ENCODE measurements at regions of chr17 and their contacts with region 1.

Region 1: GRCh38 chr17:69567130-69567529 is 152.6 kb downstream of the MAP2K6 start:
- DNase-seq: no peak
- ATAC-seq: no peak
- H3K4me3 ChIP-seq: no peak overlapping the region
- H3K4me3 Mint-ChIP-seq: no peak overlapping the region
- H3K27ac ChIP-seq: no peak overlapping the region
- H3K27ac Mint-ChIP-seq: no peak overlapping the region
- H3K4me1 ChIP-seq: peaks cover 4% of the 10 kb centered on the region
- H3K4me1 Mint-ChIP-seq: no peaks in the 10 kb centered on the region
- H3K27me3 ChIP-seq: peaks cover 0 to 6% of the 10 kb centered on the region in 2 experiments
- H3K27me3 Mint-ChIP-seq: peaks cover 7% of the 10 kb centered on the region
- CTCF ChIP-seq: no peak

Region 2: DNA sequence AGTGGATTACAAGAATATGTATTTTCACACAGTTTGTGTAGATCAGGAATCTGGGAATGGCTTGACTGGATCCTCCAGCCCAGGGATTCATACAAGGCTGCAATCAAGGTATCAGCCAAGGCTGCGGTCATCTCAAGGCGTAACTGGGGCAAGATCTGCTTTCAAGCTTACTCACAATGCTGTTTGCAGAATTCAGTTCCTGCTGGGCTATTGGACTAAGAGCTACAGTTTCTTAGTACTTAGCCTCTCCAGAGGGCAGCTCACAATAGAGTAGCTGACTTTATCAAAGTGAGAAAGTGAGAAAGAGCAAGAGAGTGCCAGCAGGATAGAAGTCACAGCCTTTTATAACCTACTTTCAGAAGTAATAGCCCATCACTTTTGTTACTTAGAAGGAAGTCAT is 58.3 kb after region 1 on chr17:
- CTCF ChIA-PET with region 1: no interaction called
- POLR2A ChIA-PET with region 1: no interaction called
- intact Hi-C with region 1: loop called in 1 of 2 experiments (anchors 10 kb)
- DNase-seq: no peak
- ATAC-seq: no peak
- H3K4me3 ChIP-seq: no peak overlapping the region
- H3K4me3 Mint-ChIP-seq: no peak overlapping the region
- H3K27ac ChIP-seq: no peak overlapping the region
- H3K27ac Mint-ChIP-seq: no peak overlapping the region
- H3K4me1 ChIP-seq: no peaks in the 10 kb centered on the region
- H3K4me1 Mint-ChIP-seq: no peaks in the 10 kb centered on the region
- H3K27me3 ChIP-seq: peaks cover 2 to 4% of the 10 kb centered on the region in 2 experiments
- H3K27me3 Mint-ChIP-seq: peaks cover 4% of the 10 kb centered on the region
- CTCF ChIP-seq: no peak

Region 3: DNA sequence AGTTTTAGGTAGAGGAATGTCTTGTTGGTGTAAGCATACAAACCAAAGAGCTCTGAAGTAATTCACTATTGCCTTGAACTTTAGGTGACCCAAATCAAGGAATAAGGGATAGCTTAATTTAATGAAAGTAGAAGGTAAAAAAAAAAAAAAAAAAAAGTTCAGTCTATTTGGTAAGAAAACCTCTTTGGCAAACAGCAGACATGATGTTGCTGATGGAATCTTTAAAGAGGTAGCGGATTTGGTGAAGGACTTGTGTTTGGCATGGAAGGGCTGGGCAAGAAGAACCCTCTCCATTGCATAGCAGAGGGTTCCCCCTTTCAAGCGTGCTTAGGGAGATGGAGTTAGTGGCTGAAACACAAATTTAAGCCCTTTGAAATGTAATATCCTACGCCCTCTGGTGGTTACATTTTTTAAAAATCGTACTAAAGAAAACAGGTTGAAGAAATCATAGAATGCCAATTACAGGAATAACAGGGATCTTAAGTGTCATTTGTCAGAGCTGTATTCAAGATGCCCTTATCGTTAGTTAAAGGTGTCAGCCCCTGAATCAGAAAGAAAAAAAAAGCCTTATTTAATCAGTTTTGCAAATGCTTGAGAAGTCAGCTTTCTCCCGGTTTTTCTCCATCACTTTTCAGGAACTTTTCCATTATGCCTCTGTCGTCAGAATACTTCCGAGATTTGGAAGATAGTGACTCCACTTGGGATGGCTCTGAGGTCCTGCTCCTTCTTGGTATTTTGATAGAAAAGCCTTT is 985.3 kb after region 1 on chr17:
- CTCF ChIA-PET with region 1: no interaction called
- POLR2A ChIA-PET with region 1: no interaction called
- intact Hi-C with region 1: loop called (anchors 5 kb)
- DNase-seq: peak in 3 of 14 experiments; percentile 12 to 19 (median 15)
- ATAC-seq: no peak
- H3K4me3 ChIP-seq: no peak overlapping the region
- H3K4me3 Mint-ChIP-seq: no peak overlapping the region
- H3K27ac ChIP-seq: no peak overlapping the region
- H3K27ac Mint-ChIP-seq: no peak overlapping the region
- H3K4me1 ChIP-seq: no peaks in the 10 kb centered on the region
- H3K4me1 Mint-ChIP-seq: no peaks in the 10 kb centered on the region
- H3K27me3 ChIP-seq: no peaks in the 10 kb centered on the region
- H3K27me3 Mint-ChIP-seq: no peaks in the 10 kb centered on the region
- CTCF ChIP-seq: peak; percentile 33

Measured in CD4-positive, alpha-beta T cell (primary cell).